Activated B cell treated with CpG ODN at 0.5 μM for 24 hours (primary cell): ENCODE measurements at regions of chr10 and their contacts with region 1.

Region 1: GRCh38 chr10:21516242-21517131 is 9.0 kb downstream of the SKIDA1 start:
- DNase-seq: peak; percentile 48
- ATAC-seq: peak; percentile 79
- H3K4me3 Mint-ChIP-seq: peak overlapping the region; percentile 82
- H3K27ac Mint-ChIP-seq: no peak overlapping the region
- H3K4me1 Mint-ChIP-seq: peaks cover 38% of the 10 kb centered on the region
- H3K27me3 Mint-ChIP-seq: peaks cover 76% of the 10 kb centered on the region
- CTCF ChIP-seq: no peak

Region 2: GRCh38 chr10:20811131-20811530 is 705.4 kb before region 1 on chr10:
- CTCF ChIA-PET with region 1: no interaction called
- POLR2A ChIA-PET with region 1: no interaction called
- intact Hi-C with region 1: no loop called
- DNase-seq: no peak
- ATAC-seq: no peak
- H3K4me3 Mint-ChIP-seq: no peak overlapping the region
- H3K27ac Mint-ChIP-seq: no peak overlapping the region
- H3K4me1 Mint-ChIP-seq: no peaks in the 10 kb centered on the region
- H3K27me3 Mint-ChIP-seq: no peaks in the 10 kb centered on the region
- CTCF ChIP-seq: no peak

Region 3: DNA sequence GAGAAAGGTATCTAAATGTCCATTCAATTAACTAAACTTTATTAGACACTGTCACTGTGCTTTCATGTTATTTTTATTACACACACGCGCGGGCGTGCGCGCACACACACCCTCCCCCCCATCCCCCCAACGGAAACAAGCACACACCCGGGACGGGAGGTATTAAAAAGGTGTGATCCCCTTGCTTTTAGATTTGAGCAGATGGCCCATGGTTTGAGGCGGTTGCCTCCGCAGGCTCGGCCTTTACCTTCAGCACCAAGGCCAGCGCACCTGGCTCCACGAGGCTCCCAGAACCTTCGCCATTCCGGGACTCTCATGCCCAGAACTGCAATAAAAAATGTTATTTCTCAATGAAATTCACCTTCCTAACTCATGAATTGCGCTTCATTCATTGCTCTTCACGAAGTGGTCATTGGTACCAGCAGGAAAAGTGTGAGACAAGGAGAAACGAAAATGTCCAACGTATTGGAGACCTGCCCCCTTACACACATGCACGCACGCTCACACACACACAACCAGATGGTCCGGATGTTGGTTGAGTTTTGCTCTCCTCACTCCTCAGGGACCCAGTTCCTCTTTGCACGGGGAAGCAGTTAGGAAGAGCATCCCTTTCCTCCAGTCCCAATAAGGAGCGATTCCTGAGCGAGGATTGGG is 1654.9 kb after region 1 on chr10:
- CTCF ChIA-PET with region 1: no interaction called
- POLR2A ChIA-PET with region 1: no interaction called
- intact Hi-C with region 1: loop called (anchors 5 kb)
- DNase-seq: no peak
- ATAC-seq: no peak
- H3K4me3 Mint-ChIP-seq: no peak overlapping the region
- H3K27ac Mint-ChIP-seq: no peak overlapping the region
- H3K4me1 Mint-ChIP-seq: no peaks in the 10 kb centered on the region
- H3K27me3 Mint-ChIP-seq: peaks cover 58% of the 10 kb centered on the region
- CTCF ChIP-seq: no peak

Region 4: GRCh38 chr10:23198940-23199767 is 1682.7 kb after region 1 on chr10:
- CTCF ChIA-PET with region 1: no interaction called
- POLR2A ChIA-PET with region 1: no interaction called
- intact Hi-C with region 1: loop called (anchors 2 kb)
- DNase-seq: no peak
- ATAC-seq: no peak
- H3K4me3 Mint-ChIP-seq: no peak overlapping the region
- H3K27ac Mint-ChIP-seq: no peak overlapping the region
- H3K4me1 Mint-ChIP-seq: no peaks in the 10 kb centered on the region
- H3K27me3 Mint-ChIP-seq: peaks cover 62% of the 10 kb centered on the region
- CTCF ChIP-seq: no peak